Activated naive CD4-positive, alpha-beta T cell treated with anti-CD3 and anti-CD28 coated beads for 36 hours (primary cell): ENCODE measurements at regions of chr2 and their contacts with region 1.

Region 1: GRCh38 chr2:156589381-156590079 is 153.4 kb downstream of the GPD2 start:
- DNase-seq: peak; percentile 34
- H3K4me3 Mint-ChIP-seq: no peak overlapping the region
- H3K27ac Mint-ChIP-seq: no peak overlapping the region
- H3K4me1 Mint-ChIP-seq: no peaks in the 10 kb centered on the region
- H3K27me3 Mint-ChIP-seq: no peaks in the 10 kb centered on the region

Region 2: GRCh38 chr2:156065905-156066304 is 523.6 kb before region 1 on chr2:
- CTCF ChIA-PET with region 1: no interaction called
- intact Hi-C with region 1: loop called (anchors 2 kb)
- DNase-seq: peak; percentile 11
- H3K4me3 Mint-ChIP-seq: no peak overlapping the region
- H3K27ac Mint-ChIP-seq: no peak overlapping the region
- H3K4me1 Mint-ChIP-seq: no peaks in the 10 kb centered on the region
- H3K27me3 Mint-ChIP-seq: no peaks in the 10 kb centered on the region

Region 3: GRCh38 chr2:156192468-156192867 is 397.1 kb before region 1 on chr2:
- CTCF ChIA-PET with region 1: interaction called, 21 read pairs
- intact Hi-C with region 1: loop called (anchors 1 kb)
- DNase-seq: peak; percentile 6
- H3K4me3 Mint-ChIP-seq: no peak overlapping the region
- H3K27ac Mint-ChIP-seq: no peak overlapping the region
- H3K4me1 Mint-ChIP-seq: no peaks in the 10 kb centered on the region
- H3K27me3 Mint-ChIP-seq: no peaks in the 10 kb centered on the region

Region 4: GRCh38 chr2:156435715-156436496 is 153.6 kb before region 1 on chr2 and contains the start of gene GPD2:
- CTCF ChIA-PET with region 1: interaction called, 4 read pairs
- intact Hi-C with region 1: loop called (anchors 2 kb)
- DNase-seq: peak; percentile 56
- H3K4me3 Mint-ChIP-seq: peak within 1 kb of the TSS; percentile 94
- H3K27ac Mint-ChIP-seq: peak within 1 kb of the TSS; percentile 92
- H3K4me1 Mint-ChIP-seq: peaks cover 30% of the 10 kb centered on the region
- H3K27me3 Mint-ChIP-seq: no peaks in the 10 kb centered on the region
- total RNA-seq, gene GPD2: 18.8 to 19.9 TPM

Region 5: GRCh38 chr2:157194097-157194688 is 604.7 kb after region 1 on chr2:
- CTCF ChIA-PET with region 1: no interaction called
- intact Hi-C with region 1: loop called (anchors 2 kb)
- DNase-seq: peak; percentile 35
- H3K4me3 Mint-ChIP-seq: no peak overlapping the region
- H3K27ac Mint-ChIP-seq: no peak overlapping the region
- H3K4me1 Mint-ChIP-seq: no peaks in the 10 kb centered on the region
- H3K27me3 Mint-ChIP-seq: peaks cover 2% of the 10 kb centered on the region